HEK293T (cell line): ENCODE measurements at regions of chr4 and their contacts with region 1.

Region 1: DNA sequence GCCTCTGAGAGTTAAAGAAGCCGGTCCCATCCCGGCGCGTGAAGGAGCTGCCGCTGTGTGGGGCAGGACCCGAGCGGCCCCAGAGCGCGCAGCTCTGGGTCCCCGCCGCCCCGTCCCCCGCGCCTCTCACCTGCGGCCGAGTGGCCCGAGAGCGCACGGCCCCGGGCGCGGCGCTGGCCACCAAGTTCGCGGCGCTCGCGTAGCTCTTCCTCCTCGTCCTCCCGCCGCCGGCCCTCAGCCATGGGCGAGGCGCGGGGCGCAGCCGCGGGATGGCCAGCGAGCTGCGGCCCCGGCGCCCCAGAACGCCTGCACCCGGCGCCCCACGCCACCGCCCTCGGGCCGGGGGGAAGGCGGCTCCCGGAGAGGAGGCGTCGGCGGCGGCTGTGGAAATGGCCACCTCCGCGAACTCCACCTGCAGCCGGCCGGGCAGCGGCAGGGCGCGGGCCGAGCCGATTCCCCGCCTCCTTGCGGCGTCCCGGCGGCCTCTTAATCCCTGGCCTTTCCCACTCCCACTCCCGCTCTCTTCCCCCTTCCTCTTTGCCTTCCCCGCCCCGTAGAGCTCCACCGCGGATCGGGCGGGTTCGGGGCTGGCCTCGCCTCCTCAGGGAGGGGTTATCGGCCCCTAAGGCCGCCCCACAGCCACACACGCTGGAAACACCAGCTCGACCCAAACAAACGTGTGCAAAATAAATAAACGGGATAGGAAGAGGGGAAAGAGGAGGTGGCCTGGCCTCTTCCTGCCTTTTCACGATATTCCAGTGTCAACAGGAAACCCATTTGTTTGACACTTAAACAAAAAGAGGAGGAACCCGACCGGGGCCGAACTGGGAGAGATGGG is at the start of gene SH3D19:
- DNase-seq: peak; percentile 60

Region 2: DNA sequence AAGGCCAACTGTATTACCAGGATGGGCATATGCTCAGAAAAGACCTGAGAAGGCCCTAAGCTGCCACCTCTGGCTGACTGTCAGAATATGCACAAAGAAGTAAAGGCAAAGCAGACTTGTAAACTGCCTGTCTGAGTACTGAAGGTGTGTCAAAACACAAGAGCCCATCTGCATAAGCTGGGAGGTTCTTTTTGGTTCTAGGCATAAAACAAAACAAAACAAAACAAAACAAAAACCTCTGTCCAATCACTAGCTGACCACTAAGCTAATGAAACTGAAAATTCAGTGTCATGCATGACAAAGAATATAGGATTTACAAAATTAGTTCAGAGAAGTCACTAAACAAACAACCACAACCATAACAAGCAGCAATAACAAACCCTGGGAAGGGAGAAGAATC is 20.6 kb before region 1 on chr4:
- CTCF ChIA-PET with region 1: interaction called, 3 read pairs
- POLR2A ChIA-PET with region 1: interaction called, 22 read pairs
- DNase-seq: no peak

Region 3: GRCh38 chr4:151340751-151341385 is 15.5 kb after region 1 on chr4:
- CTCF ChIA-PET with region 1: no interaction called
- POLR2A ChIA-PET with region 1: interaction called, 18 read pairs
- DNase-seq: no peak

Region 4: GRCh38 chr4:151347490-151348235 is 22.3 kb after region 1 on chr4:
- CTCF ChIA-PET with region 1: no interaction called
- POLR2A ChIA-PET with region 1: interaction called, 12 read pairs
- DNase-seq: no peak

Region 5: DNA sequence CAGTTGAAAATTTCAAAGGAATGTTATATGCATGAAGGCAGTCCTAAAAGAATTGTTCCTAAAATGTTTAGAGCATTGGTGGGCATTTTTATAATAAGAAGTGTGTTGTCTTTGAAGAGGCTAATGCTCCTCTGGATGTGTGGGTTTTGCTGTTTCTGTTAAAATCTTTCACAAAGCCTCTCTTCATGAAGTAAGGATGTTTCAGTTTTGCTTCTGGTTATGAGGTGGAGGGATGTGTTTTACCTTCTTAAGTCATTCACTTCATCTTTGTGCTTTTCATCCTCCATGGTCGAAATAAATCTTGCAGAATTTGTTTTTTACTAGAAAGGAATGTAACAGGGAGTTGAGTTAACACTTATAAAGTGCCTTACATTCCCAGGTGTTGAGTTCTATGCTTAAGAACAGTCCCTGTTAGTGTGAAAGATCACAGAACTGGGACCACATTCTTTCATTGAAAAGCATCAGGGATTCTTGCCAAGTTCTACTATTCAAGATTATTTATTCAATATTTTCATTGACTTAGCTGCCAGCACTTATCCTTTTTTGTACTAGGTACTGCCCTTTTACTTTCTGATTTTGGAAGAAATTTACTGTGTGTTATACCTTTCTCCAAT is 104.7 kb after region 1 on chr4:
- CTCF ChIA-PET with region 1: no interaction called
- POLR2A ChIA-PET with region 1: no interaction called
- DNase-seq: no peak